ENCODE measurements at regions of chr5 and their contacts with region 1.

Region 1: DNA sequence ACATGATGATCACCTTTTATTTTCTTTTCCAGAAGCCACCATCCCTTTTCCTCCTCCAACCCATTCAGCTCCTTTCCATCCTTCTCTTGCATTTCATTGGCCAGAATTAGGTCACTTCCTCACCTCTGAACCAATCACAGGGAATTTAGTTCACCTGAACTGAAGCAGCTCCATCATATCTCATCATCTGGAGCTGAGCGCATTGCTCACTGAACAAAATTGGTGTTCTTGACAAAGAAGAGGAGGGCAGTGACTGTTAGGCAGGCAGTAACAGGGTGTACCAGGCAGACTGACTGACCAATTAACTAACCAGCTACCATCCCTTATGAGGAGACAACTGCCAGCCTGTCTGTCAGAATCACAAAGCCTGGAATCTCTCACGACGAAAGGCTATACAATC is 1.8 kb upstream of the ZNF354A start:
- DNase-seq: no peak
- ATAC-seq: no peak

Region 2: GRCh38 chr5:178859625-178860531 is 127.6 kb after region 1 on chr5 and contains the start of gene ZNF354B:
- intact Hi-C with region 1: loop called (anchors 2 kb)
- DNase-seq: peak; percentile 93
- ATAC-seq: peak; percentile 98
- total RNA-seq, gene ZNF354B: 7.2 TPM

Measured in Right ventricle myocardium superior (tissue), 1 donor.